Activated B cell treated with CpG ODN at 0.5 μM for 24 hours (primary cell): ENCODE measurements at regions of chr11 and their contacts with region 1.

Region 1: GRCh38 chr11:111878849-111879636 is at the starts of genes CFAP68 and FDXACB1:
- DNase-seq: peak; percentile 88
- ATAC-seq: peak; percentile 88
- H3K4me3 Mint-ChIP-seq: peak within 1 kb of the TSS; percentile 96
- H3K27ac Mint-ChIP-seq: peak within 1 kb of the TSS; percentile 100
- H3K4me1 Mint-ChIP-seq: peaks cover 17% of the 10 kb centered on the region
- H3K27me3 Mint-ChIP-seq: no peaks in the 10 kb centered on the region
- CTCF ChIP-seq: peak; percentile 59
- total RNA-seq, gene CFAP68: 11.6 and 13.7 TPM in 2 replicates
- total RNA-seq, gene FDXACB1: 7.4 and 7.8 TPM in 2 replicates

Region 2: GRCh38 chr11:111194860-111195568 is 684.0 kb before region 1 on chr11:
- CTCF ChIA-PET with region 1: no interaction called
- POLR2A ChIA-PET with region 1: no interaction called
- intact Hi-C with region 1: no loop called
- DNase-seq: no peak
- ATAC-seq: no peak
- H3K4me3 Mint-ChIP-seq: no peak overlapping the region
- H3K27ac Mint-ChIP-seq: no peak overlapping the region
- H3K4me1 Mint-ChIP-seq: peaks cover 15% of the 10 kb centered on the region
- H3K27me3 Mint-ChIP-seq: no peaks in the 10 kb centered on the region
- CTCF ChIP-seq: no peak

Region 3: DNA sequence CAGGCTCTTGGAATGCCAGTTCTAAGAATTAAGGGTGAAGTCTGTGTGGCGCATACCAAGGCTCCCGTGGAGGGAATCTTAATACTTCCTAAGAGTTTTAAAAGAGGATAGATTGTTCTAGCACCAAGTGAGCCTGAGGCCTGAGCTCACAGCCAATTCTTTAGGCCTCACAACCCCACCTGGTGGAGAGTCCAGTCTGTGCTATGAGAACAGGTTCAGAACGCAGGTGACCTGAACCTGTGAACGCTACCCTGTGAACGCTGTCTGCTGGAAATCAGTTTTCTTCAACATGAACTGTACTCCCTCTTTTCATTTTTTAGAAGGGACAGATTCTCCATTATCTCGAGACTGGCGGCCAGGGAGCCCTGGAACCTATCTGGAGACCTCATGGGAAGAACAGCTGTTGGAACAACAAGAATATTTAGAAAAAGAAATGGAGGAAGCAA is 103.0 kb after region 1 on chr11:
- CTCF ChIA-PET with region 1: interaction called, 6 read pairs
- POLR2A ChIA-PET with region 1: no interaction called
- intact Hi-C with region 1: loop called (anchors 1 kb)
- DNase-seq: no peak
- ATAC-seq: peak; percentile 85
- H3K4me3 Mint-ChIP-seq: no peak overlapping the region
- H3K27ac Mint-ChIP-seq: no peak overlapping the region
- H3K4me1 Mint-ChIP-seq: peaks cover 7% of the 10 kb centered on the region
- H3K27me3 Mint-ChIP-seq: peaks cover 21% of the 10 kb centered on the region
- CTCF ChIP-seq: no peak

Region 4: GRCh38 chr11:112074026-112074811 is 195.2 kb after region 1 on chr11 and contains the start of gene NKAPD1:
- CTCF ChIA-PET with region 1: no interaction called
- POLR2A ChIA-PET with region 1: no interaction called
- intact Hi-C with region 1: loop called (anchors 1 kb)
- DNase-seq: peak; percentile 69
- ATAC-seq: peak; percentile 82
- H3K4me3 Mint-ChIP-seq: peak within 1 kb of the TSS; percentile 96
- H3K27ac Mint-ChIP-seq: peak within 1 kb of the TSS; percentile 95
- H3K4me1 Mint-ChIP-seq: peaks cover 25% of the 10 kb centered on the region
- H3K27me3 Mint-ChIP-seq: no peaks in the 10 kb centered on the region
- CTCF ChIP-seq: no peak
- total RNA-seq, gene NKAPD1: 24.0 and 26.3 TPM in 2 replicates

Region 5: DNA sequence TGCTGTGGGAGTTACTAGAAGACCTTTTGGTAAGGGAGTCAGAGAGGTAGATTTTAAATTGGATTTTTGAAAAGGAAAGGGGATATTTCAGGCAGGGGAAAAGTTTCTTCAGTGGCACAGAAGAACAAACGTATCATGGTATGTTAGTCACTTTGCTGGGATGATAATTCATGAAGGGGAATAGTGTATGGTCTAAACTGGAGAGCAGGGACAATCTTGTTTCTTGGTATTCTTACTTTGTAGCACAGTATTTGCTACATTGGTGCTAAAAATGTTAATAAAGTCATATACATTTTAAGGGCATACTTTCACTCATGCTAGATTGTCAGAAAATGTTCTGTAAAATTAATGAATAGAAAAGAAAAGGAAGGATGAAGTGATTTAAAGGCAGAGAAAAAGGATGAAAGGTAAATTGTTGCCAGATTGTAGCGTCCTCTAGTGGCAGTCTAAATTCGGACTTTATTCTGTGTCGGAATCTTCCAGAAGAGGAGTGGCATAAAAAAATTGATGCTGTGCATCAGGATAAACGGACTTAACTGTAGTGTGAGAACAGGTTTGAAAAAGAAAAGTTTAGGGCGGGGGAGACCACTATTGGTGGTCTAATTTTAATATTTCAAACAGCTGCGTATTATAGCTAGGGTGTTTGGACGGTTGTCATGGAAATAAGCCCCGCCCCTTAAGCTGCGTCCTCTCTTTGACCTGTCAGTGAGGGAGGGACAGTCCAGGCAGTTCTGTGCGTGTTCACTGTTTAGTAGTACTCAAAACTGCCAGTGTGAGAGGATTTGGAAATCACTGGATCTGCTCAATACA is 296.0 kb after region 1 on chr11 and contains the start of gene BCO2:
- CTCF ChIA-PET with region 1: no interaction called
- POLR2A ChIA-PET with region 1: no interaction called
- intact Hi-C with region 1: loop called (anchors 5 kb)
- DNase-seq: peak; percentile 18
- ATAC-seq: peak; percentile 74
- H3K4me3 Mint-ChIP-seq: peak within 1 kb of the TSS; percentile 46
- H3K27ac Mint-ChIP-seq: no peak within 1 kb of the TSS
- H3K4me1 Mint-ChIP-seq: peaks cover 23% of the 10 kb centered on the region
- H3K27me3 Mint-ChIP-seq: peaks cover 9% of the 10 kb centered on the region
- CTCF ChIP-seq: no peak
- total RNA-seq, gene BCO2: 1.4 and 3.2 TPM in 2 replicates

Region 6: DNA sequence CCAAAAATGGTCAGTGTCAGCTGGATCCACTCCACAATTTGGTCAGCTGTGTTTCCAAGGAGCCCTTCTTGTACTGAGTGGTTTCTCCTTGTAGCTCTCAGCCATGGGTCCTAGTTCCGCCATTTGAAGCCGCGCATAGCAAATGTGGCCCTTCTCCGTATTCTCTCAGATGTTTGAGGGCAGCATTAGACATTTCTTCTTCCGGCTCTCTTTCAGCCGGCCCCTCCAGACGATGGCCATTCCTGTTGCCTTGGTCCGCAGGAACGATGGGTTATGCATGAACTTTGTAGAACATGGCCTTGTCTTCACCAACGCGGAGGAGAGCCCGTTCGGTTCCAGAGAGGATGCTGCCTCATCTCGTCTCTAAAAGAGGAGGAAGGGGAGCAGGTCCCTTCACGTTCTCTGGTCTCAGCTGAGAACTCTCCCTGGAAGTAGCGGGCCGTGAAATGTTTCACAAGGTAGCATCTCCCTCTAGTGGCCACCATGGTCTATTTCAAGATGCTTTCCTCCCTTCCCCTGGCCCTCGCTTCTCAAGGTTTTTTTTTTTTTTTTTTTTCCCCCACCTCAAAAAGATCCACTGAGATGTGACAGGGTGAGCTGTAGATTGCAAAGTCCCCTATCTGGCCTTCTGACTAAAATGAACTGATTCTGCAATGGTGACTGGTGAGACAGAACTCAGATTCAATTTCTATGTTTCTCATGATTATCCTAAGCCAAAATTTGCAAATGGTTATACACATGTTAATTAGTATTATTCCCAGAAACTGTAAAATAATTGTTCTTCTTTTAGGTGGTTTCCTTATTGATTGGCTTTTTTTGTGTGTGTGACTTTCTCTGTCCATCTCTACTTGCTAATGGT is 401.5 kb after region 1 on chr11:
- CTCF ChIA-PET with region 1: interaction called, 3 read pairs
- POLR2A ChIA-PET with region 1: no interaction called
- intact Hi-C with region 1: loop called (anchors 1 kb)
- DNase-seq: peak; percentile 47
- ATAC-seq: peak; percentile 91
- H3K4me3 Mint-ChIP-seq: peak overlapping the region; percentile 91
- H3K27ac Mint-ChIP-seq: peak overlapping the region; percentile 80
- H3K4me1 Mint-ChIP-seq: peaks cover 19% of the 10 kb centered on the region
- H3K27me3 Mint-ChIP-seq: no peaks in the 10 kb centered on the region
- CTCF ChIP-seq: no peak